HEK293 (cell line): ENCODE measurements at regions of chr2 and their contacts with region 1.

Region 1: DNA sequence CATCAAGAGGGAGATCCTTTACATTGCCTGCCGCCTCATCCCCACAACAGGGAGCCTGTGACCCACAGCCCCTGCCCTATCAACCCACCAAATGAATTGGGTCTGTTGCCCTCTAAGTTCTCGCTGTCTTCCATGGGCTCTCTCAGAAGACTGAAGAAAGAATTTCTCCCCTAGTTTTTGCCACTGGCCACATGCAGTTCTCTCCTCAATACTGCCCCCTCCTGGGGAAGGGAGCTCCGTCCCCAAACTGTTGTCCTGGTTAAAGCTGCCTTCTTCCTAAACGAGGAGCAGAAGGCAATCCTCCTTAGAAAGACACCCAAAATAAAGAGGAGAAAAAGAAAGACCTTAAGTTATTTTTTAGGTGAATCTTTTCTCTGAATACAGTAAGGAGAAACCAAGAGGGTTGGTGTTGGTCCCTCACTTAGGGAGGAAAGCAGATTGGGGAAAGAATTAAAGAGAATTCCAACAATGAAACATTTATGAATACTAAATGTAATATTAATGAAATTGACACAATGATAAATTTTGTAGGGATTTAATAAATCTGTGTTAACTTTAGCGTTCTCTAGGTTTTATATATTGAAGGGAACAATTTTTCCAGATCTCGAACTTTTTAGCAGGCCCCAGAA is 31.1 kb upstream of the SATB2 start:
- H3K4me3 ChIP-seq: no peak overlapping the region
- H3K27ac ChIP-seq: no peak overlapping the region
- H3K4me1 ChIP-seq: no peaks in the 10 kb centered on the region
- CTCF ChIP-seq: peak; percentile 28; the same call in 1 of the 2 replicates

Region 2: DNA sequence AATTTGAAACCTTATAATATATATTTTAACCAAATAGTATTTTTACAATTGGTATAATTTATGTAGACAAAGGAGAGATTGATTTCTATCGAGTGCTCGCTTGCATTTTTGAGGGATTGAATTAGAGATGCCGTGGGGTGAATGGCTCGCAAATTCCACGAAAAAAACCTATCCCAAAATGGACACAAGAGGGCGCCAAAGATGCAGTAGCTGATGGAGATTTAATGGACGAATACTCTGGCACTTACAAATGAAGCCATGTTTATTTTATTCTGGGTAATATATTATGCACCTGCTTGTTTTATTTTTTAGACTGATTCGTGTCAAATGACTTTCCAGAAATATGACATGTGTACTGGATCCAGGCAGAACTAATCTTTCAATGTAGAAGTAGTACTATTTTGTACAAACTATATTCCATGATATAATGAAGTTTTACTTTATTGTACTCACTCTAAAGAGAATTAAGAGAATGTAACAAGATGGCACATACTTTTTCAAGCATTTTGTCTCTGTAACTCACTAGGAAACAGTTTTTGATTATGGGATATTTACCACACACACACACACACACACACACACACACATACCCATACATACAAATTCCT is 1179.1 kb before region 1 on chr2:
- CTCF ChIA-PET with region 1: interaction called, 17 read pairs
- POLR2A ChIA-PET with region 1: no interaction called
- H3K4me3 ChIP-seq: no peak overlapping the region
- H3K27ac ChIP-seq: no peak overlapping the region
- H3K4me1 ChIP-seq: peaks cover 4% of the 10 kb centered on the region; the same call in 1 of the 2 replicates
- CTCF ChIP-seq: peak; percentile 42; the same call in 1 of the 2 replicates

Region 3: GRCh38 chr2:198657512-198658121 is 831.3 kb before region 1 on chr2:
- CTCF ChIA-PET with region 1: interaction called, 11 read pairs
- POLR2A ChIA-PET with region 1: no interaction called
- H3K4me3 ChIP-seq: no peak overlapping the region
- H3K27ac ChIP-seq: no peak overlapping the region
- H3K4me1 ChIP-seq: no peaks in the 10 kb centered on the region
- CTCF ChIP-seq: peak; percentile 54

Region 4: GRCh38 chr2:199019898-199020507 is 468.9 kb before region 1 on chr2:
- CTCF ChIA-PET with region 1: interaction called, 10 read pairs
- POLR2A ChIA-PET with region 1: no interaction called
- H3K4me3 ChIP-seq: no peak overlapping the region
- H3K27ac ChIP-seq: no peak overlapping the region
- H3K4me1 ChIP-seq: no peaks in the 10 kb centered on the region
- CTCF ChIP-seq: no peak

Region 5: DNA sequence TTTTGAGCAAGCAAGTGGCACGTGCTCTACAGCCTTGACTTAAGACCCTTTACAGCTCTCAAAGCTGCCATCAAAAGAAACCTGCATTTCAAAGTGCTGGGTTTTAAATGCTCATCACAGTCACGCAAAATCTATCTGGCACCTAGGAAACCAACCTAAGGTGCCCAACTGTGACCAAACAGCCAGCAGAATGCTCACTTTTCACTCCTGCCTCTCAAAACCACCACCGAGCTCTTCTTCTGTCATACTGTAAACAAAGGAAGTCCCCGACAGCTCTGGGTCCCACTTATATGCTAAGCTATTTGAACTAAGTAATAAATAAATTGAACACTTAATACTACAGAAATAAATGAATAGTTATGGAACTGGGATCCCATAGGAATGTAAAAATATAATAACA is 64.7 kb before region 1 on chr2:
- CTCF ChIA-PET with region 1: no interaction called
- POLR2A ChIA-PET with region 1: no interaction called
- H3K4me3 ChIP-seq: no peak overlapping the region
- H3K27ac ChIP-seq: no peak overlapping the region
- H3K4me1 ChIP-seq: no peaks in the 10 kb centered on the region
- CTCF ChIP-seq: no peak

Region 6: DNA sequence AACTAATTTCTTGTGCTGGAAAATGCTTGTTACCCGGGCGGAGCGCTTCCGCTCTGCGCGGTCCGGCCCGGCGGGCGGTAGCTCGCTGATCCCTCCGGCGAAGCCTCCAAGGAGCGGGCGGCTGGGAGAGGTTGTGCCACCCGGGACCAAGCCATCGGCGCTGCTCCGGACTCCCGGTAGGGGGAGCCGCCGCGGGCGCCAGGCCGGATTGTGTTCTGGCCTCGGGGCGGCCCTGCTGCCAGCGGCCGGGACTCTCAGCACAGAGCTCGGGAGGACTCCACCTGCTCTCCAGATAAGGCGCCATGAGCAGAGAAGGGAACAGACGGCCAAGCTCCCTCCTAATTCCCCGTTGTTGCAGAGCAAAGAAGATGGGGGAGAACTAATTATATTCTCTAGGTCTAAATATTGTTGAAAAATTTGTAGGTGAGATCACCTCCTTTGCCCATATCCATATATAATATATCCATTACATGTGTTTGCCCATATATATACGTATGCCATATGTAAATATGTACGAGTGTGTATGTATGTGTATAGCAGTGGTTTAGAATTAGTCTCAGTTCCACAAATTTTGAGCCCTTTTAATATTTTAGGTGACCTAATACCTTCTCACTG is 17.3 kb before region 1 on chr2:
- CTCF ChIA-PET with region 1: interaction called, 30 read pairs
- POLR2A ChIA-PET with region 1: no interaction called
- H3K4me3 ChIP-seq: peak overlapping the region; percentile 2
- H3K27ac ChIP-seq: no peak overlapping the region
- H3K4me1 ChIP-seq: no peaks in the 10 kb centered on the region
- CTCF ChIP-seq: peak; percentile 89